ENCODE measurements at regions of chr1 and their contacts with region 1.

Region 1: GRCh38 chr1:9867408-9868243 is 42.4 kb downstream of the CTNNBIP1 start:
- DNase-seq: peak; percentile 61 to 74 (median 70)
- H3K4me3 ChIP-seq: no peak overlapping the region
- H3K4me3 Mint-ChIP-seq: no peak overlapping the region
- H3K27ac ChIP-seq: no peak overlapping the region
- H3K27ac Mint-ChIP-seq: peak overlapping the region in 2 of 7 donors; percentile 20 to 63
- H3K4me1 ChIP-seq: no peaks in the 10 kb centered on the region
- H3K4me1 Mint-ChIP-seq: no peaks in the 10 kb centered on the region
- H3K27me3 ChIP-seq: no peaks in the 10 kb centered on the region
- H3K27me3 Mint-ChIP-seq: peaks cover 0 to 3% (median 0%) of the 10 kb centered on the region in 3 donors
- CTCF ChIP-seq: peak; percentile 98

Region 2: DNA sequence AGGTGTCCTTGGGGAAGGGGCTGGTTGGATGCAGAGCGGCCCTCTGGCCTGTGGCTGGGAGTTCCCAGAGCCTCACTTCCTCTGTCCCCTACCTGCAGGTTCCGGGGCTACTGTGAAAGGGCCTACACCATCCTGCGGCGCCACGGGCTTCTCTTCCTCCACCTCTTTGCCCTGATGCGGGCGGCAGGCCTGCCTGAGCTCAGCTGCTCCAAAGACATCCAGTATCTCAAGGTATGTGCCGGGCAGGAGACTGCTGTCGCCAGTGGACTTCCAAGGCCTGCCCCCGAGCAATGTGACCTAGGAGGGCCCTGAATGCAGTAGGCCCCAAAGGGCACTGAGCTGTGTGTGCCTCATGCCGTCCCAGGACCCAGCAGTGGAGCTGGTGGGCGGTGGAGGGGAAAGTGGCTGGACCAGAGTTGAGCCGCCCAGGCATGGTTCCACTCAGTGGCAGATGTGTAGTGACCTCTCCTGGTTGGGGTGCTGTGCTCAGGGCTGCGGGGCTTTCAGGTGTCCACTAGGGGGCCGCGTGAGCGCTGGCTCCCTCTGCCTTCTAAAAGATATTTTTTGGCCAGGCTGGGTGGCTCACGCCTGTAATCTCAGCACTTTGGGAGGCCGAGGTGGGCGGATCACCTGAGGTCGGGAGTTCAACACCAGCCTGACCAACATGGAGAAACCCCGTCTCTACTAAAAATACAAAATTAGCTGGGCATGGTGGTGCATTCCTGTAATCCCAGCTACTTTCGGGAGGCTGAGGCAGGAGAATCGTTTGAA is 142.7 kb before region 1 on chr1:
- intact Hi-C with region 1: loop called (anchors 5 to 10 kb)
- DNase-seq: peak; percentile 48 to 62 (median 61)
- H3K4me3 ChIP-seq: no peak overlapping the region
- H3K4me3 Mint-ChIP-seq: no peak overlapping the region
- H3K27ac ChIP-seq: peak overlapping the region in 1 of 2 donors; percentile 23
- H3K27ac Mint-ChIP-seq: peak overlapping the region in 3 of 7 donors; percentile 46 to 69 (median 60)
- H3K4me1 ChIP-seq: no peaks in the 10 kb centered on the region
- H3K4me1 Mint-ChIP-seq: no peaks in the 10 kb centered on the region
- H3K27me3 ChIP-seq: no peaks in the 10 kb centered on the region
- H3K27me3 Mint-ChIP-seq: peaks cover 0 to 1% (median 0%) of the 10 kb centered on the region in 3 donors
- CTCF ChIP-seq: peak; percentile 91

Region 3: DNA sequence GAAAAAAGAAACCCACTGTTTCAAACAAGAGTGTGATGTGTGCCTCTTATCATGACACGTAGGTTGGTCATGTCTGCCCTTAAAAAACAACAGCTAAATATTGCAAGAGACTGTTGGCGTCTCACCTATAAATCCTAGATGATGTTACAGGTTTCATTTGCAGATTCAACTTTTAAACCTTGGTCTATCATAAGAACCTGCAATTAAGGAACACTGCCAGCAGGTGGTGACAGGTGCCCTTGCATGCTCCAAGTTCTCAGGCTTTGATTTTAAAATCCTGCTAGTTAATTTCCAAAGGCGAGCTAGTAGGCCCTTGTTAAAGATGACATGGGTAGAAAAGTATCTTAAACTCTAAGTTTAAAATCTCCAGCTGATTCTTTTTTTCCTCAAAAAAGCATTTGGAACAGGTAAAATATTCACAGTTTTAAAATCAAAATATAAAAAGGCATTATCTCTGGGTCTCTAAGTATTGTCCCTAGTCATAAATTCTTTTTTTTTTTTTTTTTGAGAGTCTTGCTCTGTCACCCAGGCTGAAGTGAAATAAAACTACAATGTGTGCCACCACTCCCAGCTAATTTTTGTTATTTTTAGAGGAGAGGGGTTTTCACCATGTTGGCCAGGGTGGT is 83.0 kb before region 1 on chr1:
- intact Hi-C with region 1: loop called (anchors 1 to 2 kb)
- DNase-seq: peak; percentile 42 to 63 (median 53)
- H3K4me3 ChIP-seq: no peak overlapping the region
- H3K4me3 Mint-ChIP-seq: no peak overlapping the region
- H3K27ac ChIP-seq: no peak overlapping the region
- H3K27ac Mint-ChIP-seq: no peak overlapping the region
- H3K4me1 ChIP-seq: peaks cover 16% of the 10 kb centered on the region in 2 donors
- H3K4me1 Mint-ChIP-seq: peaks cover 19% of the 10 kb centered on the region
- H3K27me3 ChIP-seq: no peaks in the 10 kb centered on the region
- H3K27me3 Mint-ChIP-seq: no peaks in the 10 kb centered on the region
- CTCF ChIP-seq: peak; percentile 85

Region 4: GRCh38 chr1:9835758-9836450 is 31.7 kb before region 1 on chr1:
- intact Hi-C with region 1: no loop called
- DNase-seq: no peak
- H3K4me3 ChIP-seq: no peak overlapping the region
- H3K4me3 Mint-ChIP-seq: no peak overlapping the region
- H3K27ac ChIP-seq: no peak overlapping the region
- H3K27ac Mint-ChIP-seq: peak overlapping the region in 2 of 7 donors; percentile 25
- H3K4me1 ChIP-seq: no peaks in the 10 kb centered on the region
- H3K4me1 Mint-ChIP-seq: peaks cover 7% of the 10 kb centered on the region
- H3K27me3 ChIP-seq: no peaks in the 10 kb centered on the region
- H3K27me3 Mint-ChIP-seq: peaks cover 1 to 10% (median 3%) of the 10 kb centered on the region in 3 donors
- CTCF ChIP-seq: no peak

Region 5: DNA sequence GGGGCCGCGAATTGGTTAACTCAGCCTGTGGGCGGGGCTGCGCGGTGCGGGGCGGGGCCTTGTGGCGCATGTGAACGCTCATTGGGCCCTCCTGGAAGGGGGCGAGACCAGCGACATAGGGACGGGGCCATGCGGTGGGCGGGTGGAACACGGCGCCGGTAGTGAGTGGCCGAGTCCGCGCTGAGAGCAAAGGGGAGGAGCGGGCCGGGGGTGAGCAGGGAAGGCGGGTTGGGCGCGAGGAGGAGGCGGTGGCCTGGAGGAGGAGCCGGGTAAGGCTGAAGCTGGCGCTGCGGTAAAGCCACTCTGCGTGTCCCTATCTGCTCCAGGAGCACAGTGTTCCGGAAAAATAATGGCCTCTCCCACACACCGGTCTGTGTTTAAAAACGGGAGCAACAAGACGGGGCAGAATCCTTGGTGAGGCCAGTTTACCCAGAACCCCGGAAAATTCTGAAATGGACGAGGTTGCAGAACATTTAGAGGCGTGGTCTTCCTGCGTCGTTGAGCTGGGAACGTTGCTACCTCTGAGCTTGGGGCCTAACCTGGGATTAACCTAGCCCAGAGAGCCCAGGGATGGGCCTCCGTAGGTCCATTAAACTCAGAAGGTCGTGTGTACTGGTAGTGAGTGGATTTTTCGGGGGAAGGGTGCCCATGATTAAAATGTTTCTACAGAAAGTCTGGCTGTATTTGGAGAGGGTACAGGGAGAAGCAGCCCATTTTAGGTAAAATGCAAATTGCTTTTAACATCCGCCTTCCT is 43.0 kb after region 1 on chr1:
- intact Hi-C with region 1: no loop called
- DNase-seq: peak; percentile 97 to 99 (median 98)
- H3K4me3 ChIP-seq: peak overlapping the region; percentile 61 to 97 (median 67)
- H3K4me3 Mint-ChIP-seq: peak overlapping the region; percentile 90 to 99
- H3K27ac ChIP-seq: peak overlapping the region; percentile 75 to 92
- H3K27ac Mint-ChIP-seq: peak overlapping the region; percentile 90 to 98 (median 97)
- H3K4me1 ChIP-seq: peaks cover 29 to 36% of the 10 kb centered on the region in 2 donors
- H3K4me1 Mint-ChIP-seq: peaks cover 46% of the 10 kb centered on the region
- H3K27me3 ChIP-seq: no peaks in the 10 kb centered on the region
- H3K27me3 Mint-ChIP-seq: peaks cover 0 to 4% (median 2%) of the 10 kb centered on the region in 3 donors
- CTCF ChIP-seq: no peak